ENCODE measurements at regions of chr15 and their contacts with region 1.

Region 1: GRCh38 chr15:65653341-65653740 is 31.6 kb downstream of the SLC24A1 start:
- DNase-seq: no peak

Region 2: DNA sequence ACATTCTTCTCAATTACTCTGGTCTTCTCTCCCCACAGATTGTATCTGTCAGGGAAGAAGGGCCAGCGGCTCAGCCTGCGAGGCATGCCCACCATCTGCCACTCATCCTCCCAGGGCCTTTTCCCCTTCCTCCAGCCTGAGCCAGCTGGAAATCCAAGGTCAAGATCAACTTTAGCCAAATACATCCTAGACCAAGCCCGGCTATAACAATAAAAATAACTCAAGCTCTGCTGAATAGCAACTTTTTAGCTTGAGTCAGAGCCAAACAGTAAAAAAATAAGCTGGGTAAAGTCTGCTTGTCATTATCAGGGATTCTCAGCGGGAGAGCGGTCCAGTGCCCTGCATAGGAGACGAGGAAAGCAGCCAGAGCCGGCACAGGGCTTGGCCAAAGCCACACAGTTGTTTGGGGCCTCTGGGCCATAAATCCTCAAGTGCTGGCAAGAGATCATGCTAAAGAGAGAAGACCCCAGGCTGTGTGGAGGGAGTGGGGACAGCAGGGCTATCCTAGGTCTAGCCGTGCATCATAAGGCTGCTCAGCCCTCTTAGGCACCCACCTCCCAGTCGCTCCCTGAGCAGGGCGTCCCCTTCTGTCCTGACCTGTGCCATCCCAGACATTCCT is 1743.4 kb before region 1 on chr15:
- intact Hi-C with region 1: loop called in 1 of 2 experiments (anchors 5 kb)
- DNase-seq: no peak